Activated CD4-positive, alpha-beta T cell treated with anti-CD3 and anti-CD28 coated beads for 36 hours (primary cell): ENCODE measurements at regions of chrX and their contacts with region 1.

Region 1: DNA sequence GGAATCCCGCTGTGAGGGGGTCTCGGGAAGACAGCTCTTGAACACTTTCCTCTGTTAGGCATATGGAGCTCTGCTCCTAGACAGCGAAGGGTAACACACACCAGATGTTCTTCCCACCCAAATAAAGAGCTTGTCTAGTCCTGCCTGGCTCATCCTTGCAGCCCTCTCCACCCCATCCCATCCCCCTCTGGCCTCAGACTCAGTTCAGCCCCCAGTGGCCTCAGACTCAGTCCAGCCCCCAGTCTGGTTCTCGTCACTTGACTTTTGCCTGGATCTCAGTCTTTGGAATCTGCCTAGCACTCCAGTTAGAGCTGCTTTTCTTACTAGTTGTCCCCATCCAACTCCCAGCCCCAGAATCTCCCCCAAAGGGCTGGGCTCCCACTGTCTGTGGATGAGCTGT is 14.9 kb downstream of the RAB33A start:
- DNase-seq: no peak
- ATAC-seq: no peak
- H3K4me3 Mint-ChIP-seq: no peak overlapping the region
- H3K27ac Mint-ChIP-seq: no peak overlapping the region
- H3K4me1 Mint-ChIP-seq: peaks cover 11% of the 10 kb centered on the region
- H3K27me3 Mint-ChIP-seq: no peaks in the 10 kb centered on the region

Region 2: GRCh38 chrX:129600981-129601424 is 585.6 kb before region 1 on chrX:
- CTCF ChIA-PET with region 1: no interaction called
- POLR2A ChIA-PET with region 1: no interaction called
- intact Hi-C with region 1: loop called (anchors 5 to 10 kb)
- DNase-seq: peak; percentile 16
- ATAC-seq: no peak
- H3K4me3 Mint-ChIP-seq: no peak overlapping the region
- H3K27ac Mint-ChIP-seq: no peak overlapping the region
- H3K4me1 Mint-ChIP-seq: peaks cover 10% of the 10 kb centered on the region
- H3K27me3 Mint-ChIP-seq: no peaks in the 10 kb centered on the region

Region 3: GRCh38 chrX:130120746-130121504 is 65.7 kb before region 1 on chrX:
- CTCF ChIA-PET with region 1: interaction called, 3 read pairs
- POLR2A ChIA-PET with region 1: no interaction called
- intact Hi-C with region 1: loop called in 1 of 2 experiments (anchors 5 kb)
- DNase-seq: peak; percentile 81
- ATAC-seq: peak; percentile 88
- H3K4me3 Mint-ChIP-seq: peak overlapping the region; percentile 57
- H3K27ac Mint-ChIP-seq: peak overlapping the region; percentile 60
- H3K4me1 Mint-ChIP-seq: peaks cover 19% of the 10 kb centered on the region
- H3K27me3 Mint-ChIP-seq: no peaks in the 10 kb centered on the region

Region 4: GRCh38 chrX:130144509-130144908 is 42.1 kb before region 1 on chrX:
- CTCF ChIA-PET with region 1: interaction called, 3 read pairs
- POLR2A ChIA-PET with region 1: no interaction called
- intact Hi-C with region 1: loop called (anchors 5 to 10 kb)
- DNase-seq: no peak
- ATAC-seq: no peak
- H3K4me3 Mint-ChIP-seq: no peak overlapping the region
- H3K27ac Mint-ChIP-seq: no peak overlapping the region
- H3K4me1 Mint-ChIP-seq: no peaks in the 10 kb centered on the region
- H3K27me3 Mint-ChIP-seq: no peaks in the 10 kb centered on the region